ENCODE measurements at regions of chr11 and their contacts with region 1.

Region 1: DNA sequence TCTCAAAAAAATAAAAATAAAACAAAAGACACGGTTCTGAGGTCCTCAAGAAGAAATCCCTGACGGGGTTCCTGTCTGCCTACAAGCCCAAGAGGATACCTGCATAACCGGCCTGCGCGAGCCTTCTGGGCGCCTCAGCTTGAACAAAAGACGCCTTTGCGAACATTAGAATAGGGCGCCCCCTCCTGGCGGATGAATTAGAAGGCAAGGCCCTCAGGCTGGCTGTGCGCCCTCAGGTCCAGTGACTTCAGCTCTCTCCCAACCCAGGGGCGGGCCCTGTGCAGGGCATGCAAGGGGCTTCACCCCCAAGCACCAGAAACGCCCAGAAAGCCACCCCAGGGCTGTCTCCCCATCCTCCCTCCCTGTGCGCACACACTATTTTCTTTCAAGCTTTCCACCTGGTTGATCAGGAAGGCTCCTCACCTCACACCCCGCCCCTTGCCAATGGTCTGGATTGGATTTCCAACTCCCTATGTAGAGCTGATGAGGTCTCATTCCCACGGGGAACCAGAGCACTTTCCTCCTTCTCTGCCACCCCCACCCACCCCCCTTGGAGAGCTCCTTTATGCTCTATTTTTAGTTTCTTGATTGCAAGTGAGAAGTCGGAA is 273.3 kb downstream of the BUD13 start:
- DNase-seq: peak; percentile 78
- ATAC-seq: peak; percentile 96
- H3K4me3 ChIP-seq: no peak overlapping the region
- H3K27ac ChIP-seq: no peak overlapping the region
- H3K4me1 ChIP-seq: peaks cover 10% of the 10 kb centered on the region; the same call in 1 of the 2 replicates
- H3K27me3 ChIP-seq: peaks cover 1 to 21% of the 10 kb centered on the region in 2 experiments; a peak in 1 of 5 replicates
- CTCF ChIP-seq: peak; percentile 89
- EP300 ChIP-seq: no peak
- POLR2A ChIP-seq: no peak
- RAD21 ChIP-seq: peak; percentile 83

Region 2: DNA sequence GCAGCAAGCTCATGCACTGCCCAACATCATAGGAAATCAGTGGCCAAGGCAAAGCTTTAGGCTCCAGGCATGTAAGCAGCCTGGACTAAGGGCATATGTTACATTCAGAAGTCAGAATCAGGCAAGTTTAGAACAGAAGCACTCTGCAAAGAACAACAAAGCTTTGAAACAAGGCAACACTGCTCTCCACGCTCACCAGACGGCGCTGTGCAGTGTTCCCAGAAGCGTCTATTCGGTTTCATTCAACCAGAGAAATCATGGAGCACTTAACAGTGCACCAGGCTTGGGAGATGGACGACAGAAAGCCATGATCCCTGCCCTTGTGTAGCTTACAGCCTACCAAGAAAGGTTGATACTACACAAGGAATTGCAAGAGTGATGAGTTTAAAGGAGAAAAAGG is 282.5 kb before region 1 on chr11:
- CTCF ChIA-PET with region 1: interaction called, 5 read pairs
- POLR2A ChIA-PET with region 1: no interaction called
- in situ Hi-C with region 1: loop called (anchors 10 kb)
- intact Hi-C with region 1: loop called (anchors 5 kb)
- DNase-seq: peak; percentile 34
- ATAC-seq: peak; percentile 85
- H3K4me3 ChIP-seq: no peak overlapping the region
- H3K27ac ChIP-seq: no peak overlapping the region
- H3K4me1 ChIP-seq: no peaks in the 10 kb centered on the region
- H3K27me3 ChIP-seq: peaks cover 0 to 2% of the 10 kb centered on the region in 2 experiments; a peak in 1 of 5 replicates
- CTCF ChIP-seq: peak; percentile 72
- EP300 ChIP-seq: no peak
- POLR2A ChIP-seq: no peak
- RAD21 ChIP-seq: no peak

Region 3: GRCh38 chr11:116276051-116277044 is 223.2 kb before region 1 on chr11:
- CTCF ChIA-PET with region 1: interaction called, 11 read pairs
- POLR2A ChIA-PET with region 1: no interaction called
- in situ Hi-C with region 1: loop called (anchors 10 kb)
- intact Hi-C with region 1: loop called (anchors 2 kb)
- DNase-seq: peak; percentile 67
- ATAC-seq: peak; percentile 97
- H3K4me3 ChIP-seq: peak overlapping the region; percentile 39 to 71 (median 43); a peak in 4 of 6 replicates
- H3K27ac ChIP-seq: no peak overlapping the region
- H3K4me1 ChIP-seq: peaks cover 6% of the 10 kb centered on the region; the same call in 1 of the 2 replicates
- H3K27me3 ChIP-seq: no peaks in the 10 kb centered on the region; a peak in 1 of 5 replicates
- CTCF ChIP-seq: peak; percentile 92
- EP300 ChIP-seq: no peak
- POLR2A ChIP-seq: no peak
- RAD21 ChIP-seq: peak; percentile 93

Region 4: DNA sequence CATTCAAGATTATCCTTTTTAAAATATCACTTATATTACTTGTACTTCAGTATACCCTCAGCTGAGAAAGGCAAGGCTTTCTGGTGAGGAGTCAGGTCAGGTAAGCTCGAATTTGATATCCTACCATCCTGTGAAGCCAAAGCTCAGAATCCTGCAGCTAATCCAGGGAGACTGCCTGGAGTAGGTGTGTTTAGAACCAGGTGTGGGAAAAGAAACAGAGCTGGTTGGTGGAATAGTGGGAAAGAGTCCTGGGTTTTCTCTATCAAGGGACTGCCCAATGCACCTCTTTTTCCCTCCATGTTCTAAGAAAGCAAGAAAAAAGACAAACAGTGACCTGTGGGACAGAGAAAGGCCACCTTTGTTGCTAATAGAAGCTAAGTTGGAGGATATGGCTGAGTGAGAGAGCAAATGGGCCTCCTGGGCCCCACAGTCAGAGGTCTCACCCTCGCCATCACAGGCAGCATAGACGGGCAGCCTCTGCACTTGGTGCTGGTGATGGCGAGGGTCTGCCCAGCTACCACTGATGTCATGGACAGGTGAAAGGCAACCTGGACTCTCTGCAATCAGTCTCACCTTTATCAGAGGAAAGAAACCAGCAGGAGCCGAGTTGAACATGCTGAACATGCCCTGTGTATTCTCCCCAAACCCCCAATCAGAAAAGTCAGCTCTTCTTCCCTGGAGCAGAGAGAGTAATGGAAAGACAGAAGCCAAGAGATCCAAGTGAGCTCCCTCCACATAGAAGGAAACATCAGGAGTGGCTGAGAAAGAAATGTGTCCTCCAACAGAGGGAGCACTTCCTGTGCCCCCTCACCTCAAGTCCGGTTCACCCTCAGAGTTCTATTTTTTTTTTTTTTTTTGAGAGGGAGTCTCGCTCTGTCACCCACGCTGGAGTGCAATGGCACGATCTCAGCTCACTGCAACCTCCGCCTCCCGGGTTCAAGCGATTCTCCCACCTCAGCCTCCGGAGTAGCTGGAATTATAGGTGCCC is 218.0 kb before region 1 on chr11:
- CTCF ChIA-PET with region 1: interaction called, 11 read pairs
- POLR2A ChIA-PET with region 1: no interaction called
- in situ Hi-C with region 1: loop called (anchors 10 kb)
- intact Hi-C with region 1: loop called (anchors 2 kb)
- DNase-seq: no peak
- ATAC-seq: no peak; the same call in 2 of the 3 replicates
- H3K4me3 ChIP-seq: no peak overlapping the region
- H3K27ac ChIP-seq: no peak overlapping the region
- H3K4me1 ChIP-seq: peaks cover 6% of the 10 kb centered on the region; the same call in 1 of the 2 replicates
- H3K27me3 ChIP-seq: no peaks in the 10 kb centered on the region
- CTCF ChIP-seq: no peak; the same call in 1 of the 2 replicates
- EP300 ChIP-seq: no peak
- POLR2A ChIP-seq: no peak
- RAD21 ChIP-seq: no peak

Region 5: GRCh38 chr11:116379185-116379828 is 120.2 kb before region 1 on chr11:
- CTCF ChIA-PET with region 1: interaction called, 5 read pairs
- POLR2A ChIA-PET with region 1: no interaction called
- in situ Hi-C with region 1: no loop called
- intact Hi-C with region 1: loop called (anchors 5 kb)
- DNase-seq: peak; percentile 21
- ATAC-seq: no peak
- H3K4me3 ChIP-seq: no peak overlapping the region
- H3K27ac ChIP-seq: no peak overlapping the region
- H3K4me1 ChIP-seq: peaks cover 32% of the 10 kb centered on the region
- H3K27me3 ChIP-seq: no peaks in the 10 kb centered on the region
- CTCF ChIP-seq: no peak
- EP300 ChIP-seq: no peak
- POLR2A ChIP-seq: no peak
- RAD21 ChIP-seq: no peak

Region 6: DNA sequence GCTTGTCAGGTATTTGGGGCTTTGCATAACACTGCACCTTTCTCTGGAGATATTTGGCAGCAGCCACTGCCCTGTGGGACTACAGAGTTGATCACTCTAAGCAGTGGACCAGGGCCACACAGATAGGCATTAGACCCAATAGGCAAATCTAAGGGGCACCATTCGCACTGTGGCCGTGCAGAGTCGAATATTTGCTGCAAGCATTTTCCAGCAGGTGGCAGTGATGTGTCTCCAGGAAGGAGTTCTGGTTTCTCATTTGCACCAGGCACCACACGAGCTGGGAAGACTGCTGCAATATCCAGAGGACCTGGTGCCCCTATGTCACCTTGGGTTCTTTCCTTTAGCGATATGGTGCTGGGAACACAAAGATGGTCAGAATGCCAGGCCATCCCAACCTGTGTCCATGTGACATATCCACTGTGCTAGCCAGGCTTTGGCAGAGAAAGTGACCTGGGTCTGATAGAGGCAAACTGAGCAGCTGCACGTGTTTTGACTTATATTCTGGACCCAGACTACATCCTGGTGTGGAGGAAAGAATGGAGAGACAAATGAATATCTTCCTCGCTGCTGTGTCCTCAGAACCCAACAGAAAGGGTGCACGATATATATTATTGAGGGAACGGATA is 45.4 kb before region 1 on chr11:
- CTCF ChIA-PET with region 1: interaction called, 15 read pairs
- POLR2A ChIA-PET with region 1: no interaction called
- in situ Hi-C with region 1: no loop called
- intact Hi-C with region 1: loop called (anchors 1 kb)
- DNase-seq: peak; percentile 43
- ATAC-seq: peak; percentile 87
- H3K4me3 ChIP-seq: no peak overlapping the region
- H3K27ac ChIP-seq: no peak overlapping the region
- H3K4me1 ChIP-seq: no peaks in the 10 kb centered on the region
- H3K27me3 ChIP-seq: no peaks in the 10 kb centered on the region
- CTCF ChIP-seq: peak; percentile 78
- EP300 ChIP-seq: no peak
- POLR2A ChIP-seq: no peak
- RAD21 ChIP-seq: 0 out of 2 replicates have a peak, but pooled peaks have one; percentile 47

Region 7: GRCh38 chr11:116485425-116485824 is 14.1 kb before region 1 on chr11:
- CTCF ChIA-PET with region 1: no interaction called
- POLR2A ChIA-PET with region 1: no interaction called
- in situ Hi-C with region 1: no loop called
- intact Hi-C with region 1: no loop called
- DNase-seq: peak; percentile 54
- ATAC-seq: peak; percentile 93
- H3K4me3 ChIP-seq: no peak overlapping the region
- H3K27ac ChIP-seq: no peak overlapping the region
- H3K4me1 ChIP-seq: peaks cover 11% of the 10 kb centered on the region; the same call in 1 of the 2 replicates
- H3K27me3 ChIP-seq: peaks cover 0 to 3% of the 10 kb centered on the region in 2 experiments; a peak in 1 of 5 replicates
- CTCF ChIP-seq: no peak
- EP300 ChIP-seq: peak in 1 of 2 experiments; percentile 70; a peak in 1 of 4 replicates
- POLR2A ChIP-seq: no peak
- RAD21 ChIP-seq: no peak

Measured in HepG2 (cell line).